ENCODE measurements at regions of chr16 and their contacts with region 1.

Region 1: GRCh38 chr16:457732-458400 is 32.4 kb downstream of the RAB11FIP3 start:
- DNase-seq: no peak
- H3K4me3 ChIP-seq: no peak overlapping the region
- H3K27me3 ChIP-seq: no peaks in the 10 kb centered on the region
- CTCF ChIP-seq: no peak

Region 2: GRCh38 chr16:386641-387156 is 71.2 kb before region 1 on chr16:
- CTCF ChIA-PET with region 1: no interaction called
- POLR2A ChIA-PET with region 1: interaction called, 13 read pairs
- DNase-seq: no peak
- H3K4me3 ChIP-seq: no peak overlapping the region
- H3K27me3 ChIP-seq: no peaks in the 10 kb centered on the region
- CTCF ChIP-seq: no peak

Measured in BJ (cell line).